Endothelial cell of umbilical vein (primary cell): ENCODE measurements at regions of chr3 and their contacts with region 1.

Region 1: GRCh38 chr3:17645072-17645698 is 97.2 kb downstream of the TBC1D5 start:
- DNase-seq: peak; percentile 76
- H3K4me3 ChIP-seq: no peak overlapping the region
- H3K27ac ChIP-seq: no peak overlapping the region
- H3K4me1 ChIP-seq: peaks cover 8% of the 10 kb centered on the region
- H3K27me3 ChIP-seq: no peaks in the 10 kb centered on the region
- CTCF ChIP-seq: peak; percentile 51 to 61
- POLR2A ChIP-seq: no peak

Region 2: GRCh38 chr3:17140670-17141505 is 504.3 kb before region 1 on chr3:
- CTCF ChIA-PET with region 1: no interaction called
- POLR2A ChIA-PET with region 1: no interaction called
- dilution Hi-C with region 1: no loop called
- intact Hi-C with region 1: no loop called
- DNase-seq: no peak
- H3K4me3 ChIP-seq: no peak overlapping the region
- H3K27ac ChIP-seq: no peak overlapping the region
- H3K4me1 ChIP-seq: no peaks in the 10 kb centered on the region
- H3K27me3 ChIP-seq: no peaks in the 10 kb centered on the region
- CTCF ChIP-seq: no peak
- POLR2A ChIP-seq: no peak

Region 3: GRCh38 chr3:17562845-17563244 is 82.3 kb before region 1 on chr3:
- CTCF ChIA-PET with region 1: interaction called, 6 read pairs
- POLR2A ChIA-PET with region 1: no interaction called
- dilution Hi-C with region 1: no loop called
- intact Hi-C with region 1: loop called (anchors 5 kb)
- DNase-seq: no peak
- H3K4me3 ChIP-seq: no peak overlapping the region
- H3K27ac ChIP-seq: no peak overlapping the region
- H3K4me1 ChIP-seq: no peaks in the 10 kb centered on the region
- H3K27me3 ChIP-seq: no peaks in the 10 kb centered on the region
- CTCF ChIP-seq: no peak
- POLR2A ChIP-seq: no peak

Region 4: GRCh38 chr3:17655743-17656142 is 10.6 kb after region 1 on chr3:
- CTCF ChIA-PET with region 1: interaction called, 53 read pairs
- POLR2A ChIA-PET with region 1: no interaction called
- dilution Hi-C with region 1: no loop called
- intact Hi-C with region 1: no loop called
- DNase-seq: no peak
- H3K4me3 ChIP-seq: no peak overlapping the region
- H3K27ac ChIP-seq: no peak overlapping the region
- H3K4me1 ChIP-seq: no peaks in the 10 kb centered on the region
- H3K27me3 ChIP-seq: no peaks in the 10 kb centered on the region
- CTCF ChIP-seq: no peak
- POLR2A ChIP-seq: no peak

Region 5: GRCh38 chr3:17733215-17733614 is 88.0 kb after region 1 on chr3:
- CTCF ChIA-PET with region 1: interaction called, 12 read pairs
- POLR2A ChIA-PET with region 1: no interaction called
- dilution Hi-C with region 1: no loop called
- intact Hi-C with region 1: no loop called
- DNase-seq: no peak
- H3K4me3 ChIP-seq: no peak overlapping the region
- H3K27ac ChIP-seq: no peak overlapping the region
- H3K4me1 ChIP-seq: peaks cover 3% of the 10 kb centered on the region
- H3K27me3 ChIP-seq: no peaks in the 10 kb centered on the region
- CTCF ChIP-seq: no peak
- POLR2A ChIP-seq: no peak

Region 6: DNA sequence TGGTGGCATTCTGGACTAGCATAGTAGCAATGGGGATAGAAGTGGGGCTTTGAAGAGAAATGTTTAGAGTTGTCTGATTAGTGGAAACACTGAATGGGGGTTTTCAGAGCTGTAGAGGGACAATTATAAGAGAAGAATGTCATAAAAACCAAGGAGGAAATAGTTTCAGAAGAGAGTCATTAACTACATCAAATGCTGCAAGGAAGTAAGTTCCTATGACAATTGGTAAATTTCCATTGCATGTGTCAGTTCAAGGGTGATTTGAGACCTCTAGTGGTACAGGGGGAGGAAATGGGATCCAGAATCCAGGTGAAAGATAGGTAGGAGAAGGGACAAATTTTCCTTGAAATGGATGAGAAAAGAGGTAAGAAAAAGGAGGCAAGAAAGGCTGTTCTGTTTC is 165.6 kb after region 1 on chr3:
- CTCF ChIA-PET with region 1: interaction called, 11 read pairs
- POLR2A ChIA-PET with region 1: no interaction called
- dilution Hi-C with region 1: no loop called
- intact Hi-C with region 1: loop called (anchors 5 kb)
- DNase-seq: peak; percentile 15
- H3K4me3 ChIP-seq: no peak overlapping the region
- H3K27ac ChIP-seq: no peak overlapping the region
- H3K4me1 ChIP-seq: peaks cover 2% of the 10 kb centered on the region
- H3K27me3 ChIP-seq: no peaks in the 10 kb centered on the region
- CTCF ChIP-seq: no peak
- POLR2A ChIP-seq: no peak